T-cell (primary cell): ENCODE measurements at regions of chr3 and their contacts with region 1.

Region 1: DNA sequence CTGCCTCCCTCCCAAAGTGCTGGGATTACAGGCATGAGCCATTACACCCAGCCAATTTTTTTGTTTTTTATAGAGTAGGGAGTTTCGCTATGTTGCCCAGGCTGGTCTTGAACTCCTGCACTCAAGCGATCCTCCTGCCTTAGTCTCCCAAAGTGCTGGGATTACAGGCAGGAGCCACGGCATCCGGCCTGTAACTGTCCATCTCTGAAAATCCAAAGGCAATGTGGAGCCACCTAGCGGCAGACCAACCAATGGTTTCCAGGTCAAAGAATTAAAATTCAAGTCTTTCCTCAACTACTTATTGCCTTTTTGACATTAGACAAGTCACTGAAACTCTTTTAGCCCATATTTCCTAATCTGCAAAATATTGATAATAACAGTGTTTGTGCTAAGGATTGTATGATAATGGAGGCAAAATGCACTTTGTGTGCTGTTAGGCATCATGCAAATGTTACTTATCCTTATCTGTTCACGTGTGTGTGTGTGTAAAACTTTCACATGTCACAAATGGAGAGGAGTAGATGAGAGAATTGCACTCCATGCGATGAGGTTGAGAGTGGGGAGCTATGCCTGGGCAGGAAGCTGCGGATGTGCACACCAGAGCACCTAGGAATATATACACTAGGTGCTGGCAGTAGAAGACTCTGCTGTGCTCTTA is 48.7 kb downstream of the COL8A1 start:
- DNase-seq: peak in 9 of 35 experiments; percentile 0 to 18 (median 4)
- ATAC-seq: no peak
- H3K4me3 ChIP-seq: no peak overlapping the region
- H3K4me3 Mint-ChIP-seq: no peak overlapping the region
- H3K27ac ChIP-seq: no peak overlapping the region
- H3K27ac Mint-ChIP-seq: no peak overlapping the region
- H3K4me1 ChIP-seq: no peaks in the 10 kb centered on the region
- H3K4me1 Mint-ChIP-seq: no peaks in the 10 kb centered on the region
- H3K27me3 ChIP-seq: peaks cover 0 to 5% of the 10 kb centered on the region in 2 experiments
- H3K27me3 Mint-ChIP-seq: peaks cover 2 to 19% of the 10 kb centered on the region in 2 donors

Region 2: DNA sequence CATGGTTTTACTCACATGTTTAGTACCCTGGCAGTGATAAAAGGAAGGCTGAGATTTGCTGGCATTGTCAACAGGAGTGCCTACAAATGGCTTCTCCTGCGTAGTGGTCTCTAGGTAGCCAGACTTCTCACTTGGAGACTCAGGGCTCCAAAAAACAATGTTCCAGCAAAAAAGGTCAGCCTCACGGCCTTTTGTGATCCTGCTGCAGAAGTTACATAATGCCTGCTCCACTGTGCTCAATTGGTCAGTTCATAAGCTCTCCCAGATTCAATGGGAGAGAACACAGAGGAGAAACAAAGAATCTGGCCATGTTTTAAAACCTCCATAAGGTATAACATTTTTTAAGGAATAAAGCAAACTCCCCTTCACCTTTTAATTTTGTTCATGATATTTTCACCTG is 54.5 kb after region 1 on chr3:
- CTCF ChIA-PET with region 1: interaction called in 1 of 2 experiments, 15 read pairs
- POLR2A ChIA-PET with region 1: no interaction called
- DNase-seq: no peak
- ATAC-seq: no peak
- H3K4me3 ChIP-seq: no peak overlapping the region
- H3K4me3 Mint-ChIP-seq: no peak overlapping the region
- H3K27ac ChIP-seq: no peak overlapping the region
- H3K27ac Mint-ChIP-seq: no peak overlapping the region
- H3K4me1 ChIP-seq: no peaks in the 10 kb centered on the region
- H3K4me1 Mint-ChIP-seq: no peaks in the 10 kb centered on the region
- H3K27me3 ChIP-seq: peaks cover 0 to 8% of the 10 kb centered on the region in 2 experiments
- H3K27me3 Mint-ChIP-seq: peaks cover 5% of the 10 kb centered on the region in 2 donors